Posterior vena cava (tissue), 2 donors: ENCODE measurements at regions of chr13 and their contacts with region 1.

Region 1: GRCh38 chr13:70222926-70223325 is 114.7 kb upstream of the KLHL1 start:
- DNase-seq: no peak

Region 2: DNA sequence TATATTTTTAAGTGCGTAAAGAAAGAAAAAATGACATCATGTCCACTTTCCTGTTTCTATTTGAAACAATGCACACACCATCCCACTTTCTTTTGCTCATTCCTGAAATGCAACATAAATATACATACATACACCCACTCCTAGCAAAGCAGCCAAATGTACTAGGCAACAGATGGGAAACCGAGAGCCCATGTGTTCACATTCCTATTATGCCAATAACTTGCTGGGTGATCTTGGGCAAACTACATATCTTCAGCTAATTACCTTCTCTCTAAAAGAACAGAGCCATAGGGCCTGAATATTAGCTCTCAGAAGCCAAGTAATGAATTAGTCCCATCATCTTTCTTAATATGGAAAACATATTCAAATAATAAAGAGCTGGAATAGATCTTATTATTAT is 725.9 kb before region 1 on chr13:
- intact Hi-C with region 1: loop called in 1 of 2 experiments (anchors 5 kb)
- DNase-seq: no peak

Region 3: GRCh38 chr13:70249332-70250064 is 26.6 kb after region 1 on chr13:
- intact Hi-C with region 1: no loop called
- DNase-seq: no peak

Region 4: DNA sequence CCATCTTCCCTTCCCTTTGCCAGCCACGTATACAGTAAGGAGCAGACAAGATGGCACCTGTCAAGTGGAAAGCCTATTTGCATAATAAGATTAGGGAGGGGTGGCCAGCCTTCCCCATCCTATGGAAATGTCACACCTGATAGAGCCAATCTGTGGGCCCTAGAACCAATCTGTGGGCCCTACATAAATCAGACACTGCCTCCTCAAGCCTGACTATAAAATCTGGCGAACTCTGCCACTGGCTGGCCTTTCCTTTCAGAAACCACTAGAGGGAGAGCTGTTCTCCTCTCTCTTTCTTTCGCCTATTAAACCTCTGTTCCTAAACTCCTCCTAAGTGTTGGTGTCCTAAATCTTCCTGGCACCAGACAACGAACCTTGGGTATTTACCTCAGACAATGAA is 116.8 kb after region 1 on chr13:
- intact Hi-C with region 1: no loop called
- DNase-seq: no peak